ENCODE measurements at regions of chr4 and their contacts with region 1.

Region 1: DNA sequence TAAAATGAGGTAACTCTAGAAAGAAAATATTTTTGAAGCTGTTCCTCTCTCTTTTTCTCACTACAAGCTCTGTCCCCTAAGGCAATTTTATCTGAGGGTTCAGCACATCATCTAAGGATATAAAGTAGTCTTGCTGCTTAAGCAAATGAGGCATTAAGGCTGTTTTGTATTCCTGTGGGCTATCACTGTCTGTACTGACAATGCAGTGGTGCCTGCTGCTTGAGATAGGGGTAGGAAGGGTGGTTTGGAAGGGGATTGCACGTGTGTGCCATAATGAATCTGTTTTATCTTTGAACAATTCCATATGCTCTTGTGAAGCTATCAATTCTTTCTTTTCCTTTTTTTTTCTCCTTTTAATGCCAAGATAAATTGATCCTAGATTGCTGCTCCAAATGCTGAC is 128.0 kb upstream of the ATOH1 start:
- DNase-seq: no peak
- CTCF ChIP-seq: no peak

Region 2: DNA sequence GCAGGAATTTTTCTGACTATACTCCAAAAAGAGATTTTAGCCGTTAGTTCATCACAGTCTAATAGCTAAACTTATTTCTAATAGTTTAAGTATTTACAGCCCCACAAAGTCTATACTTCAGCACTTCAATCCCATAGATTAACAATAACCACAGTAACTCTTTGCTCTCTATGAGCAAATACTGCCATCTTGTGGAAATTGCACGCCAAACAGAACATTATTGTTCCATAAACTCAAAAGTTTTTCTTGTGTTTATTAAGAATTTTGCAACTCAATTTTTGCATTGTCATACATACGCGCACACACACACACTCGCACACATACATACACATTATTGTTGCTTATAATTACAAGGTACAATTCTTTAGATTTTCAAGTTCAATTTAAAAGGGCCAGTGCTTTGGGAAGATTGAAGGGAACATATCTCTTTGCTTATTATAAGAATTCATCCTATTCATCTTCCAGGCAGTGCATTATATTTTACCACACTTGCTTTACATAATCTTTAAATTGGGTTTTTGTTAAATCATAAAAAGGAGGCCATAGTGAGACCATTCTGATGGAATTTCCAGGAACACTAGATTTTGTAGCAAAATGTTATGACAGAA is 64.2 kb after region 1 on chr4:
- in situ Hi-C with region 1: loop called (anchors 10 kb)
- DNase-seq: peak; percentile 42
- CTCF ChIP-seq: peak; percentile 63

Measured in GM13976 (cell line).